Activated CD4-positive, alpha-beta T cell treated with anti-CD3 and anti-CD28 coated beads for 36 hours (primary cell): ENCODE measurements at regions of chr2 and their contacts with region 1.

Region 1: GRCh38 chr2:241508240-241509154 is at the start of gene STK25:
- DNase-seq: peak; percentile 99
- ATAC-seq: peak; percentile 96
- H3K4me3 Mint-ChIP-seq: peak within 1 kb of the TSS; percentile 79
- H3K27ac Mint-ChIP-seq: peak within 1 kb of the TSS; percentile 58
- H3K4me1 Mint-ChIP-seq: peaks cover 19% of the 10 kb centered on the region
- H3K27me3 Mint-ChIP-seq: peaks cover 3% of the 10 kb centered on the region
- total RNA-seq, gene STK25: 93.5 to 123 TPM

Region 2: DNA sequence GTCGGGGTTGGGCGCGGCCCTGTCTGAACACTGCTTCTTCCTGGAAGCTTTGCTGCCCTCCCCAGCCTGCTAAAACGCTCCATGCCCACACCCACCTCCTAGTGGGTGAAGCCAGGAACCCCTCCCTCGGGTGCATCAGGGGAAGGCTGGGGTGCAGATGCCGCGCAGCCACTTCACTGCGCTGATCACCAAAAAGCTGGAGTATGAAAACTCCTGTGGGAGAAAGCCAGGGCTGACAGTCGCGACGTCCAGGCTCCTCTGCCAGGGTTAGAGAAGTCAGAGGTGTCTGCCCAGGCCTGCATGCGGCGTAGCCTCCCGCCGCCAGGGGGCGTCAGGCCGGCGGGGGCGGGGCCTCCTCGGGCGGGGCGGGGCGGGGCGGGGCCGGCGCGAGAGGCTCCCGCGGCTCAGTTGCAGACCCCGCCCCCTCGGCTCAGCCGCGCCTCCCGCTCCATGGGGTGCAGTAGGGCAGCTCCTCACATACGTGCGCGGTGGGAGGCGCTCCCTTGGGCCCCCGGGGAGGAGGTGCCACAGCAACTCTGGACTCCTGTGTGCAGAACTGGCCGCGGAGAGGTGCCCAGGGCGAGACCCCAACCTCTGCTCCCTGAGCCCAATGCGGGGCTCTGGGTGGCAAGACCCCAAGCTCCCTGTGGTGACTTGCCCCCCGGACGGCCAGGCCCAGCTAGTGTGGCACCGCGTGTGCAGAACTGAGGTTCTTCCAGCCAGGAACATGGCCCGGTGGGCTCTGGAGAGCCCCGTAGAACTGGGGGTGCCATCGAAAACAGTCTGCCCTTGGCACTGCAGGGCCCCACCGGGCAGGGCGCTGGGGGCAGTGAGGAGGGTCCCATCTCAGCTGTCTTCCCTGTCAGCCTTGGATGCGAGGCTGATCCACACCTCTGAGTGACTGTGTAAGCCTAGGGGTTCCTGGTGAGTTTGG is 942.0 kb before region 1 on chr2:
- CTCF ChIA-PET with region 1: no interaction called
- POLR2A ChIA-PET with region 1: no interaction called
- intact Hi-C with region 1: loop called in 1 of 2 experiments (anchors 5 kb)
- DNase-seq: peak; percentile 98
- ATAC-seq: peak; percentile 67
- H3K4me3 Mint-ChIP-seq: peak overlapping the region; percentile 87
- H3K27ac Mint-ChIP-seq: peak overlapping the region; percentile 98
- H3K4me1 Mint-ChIP-seq: peaks cover 65% of the 10 kb centered on the region
- H3K27me3 Mint-ChIP-seq: no peaks in the 10 kb centered on the region

Region 3: DNA sequence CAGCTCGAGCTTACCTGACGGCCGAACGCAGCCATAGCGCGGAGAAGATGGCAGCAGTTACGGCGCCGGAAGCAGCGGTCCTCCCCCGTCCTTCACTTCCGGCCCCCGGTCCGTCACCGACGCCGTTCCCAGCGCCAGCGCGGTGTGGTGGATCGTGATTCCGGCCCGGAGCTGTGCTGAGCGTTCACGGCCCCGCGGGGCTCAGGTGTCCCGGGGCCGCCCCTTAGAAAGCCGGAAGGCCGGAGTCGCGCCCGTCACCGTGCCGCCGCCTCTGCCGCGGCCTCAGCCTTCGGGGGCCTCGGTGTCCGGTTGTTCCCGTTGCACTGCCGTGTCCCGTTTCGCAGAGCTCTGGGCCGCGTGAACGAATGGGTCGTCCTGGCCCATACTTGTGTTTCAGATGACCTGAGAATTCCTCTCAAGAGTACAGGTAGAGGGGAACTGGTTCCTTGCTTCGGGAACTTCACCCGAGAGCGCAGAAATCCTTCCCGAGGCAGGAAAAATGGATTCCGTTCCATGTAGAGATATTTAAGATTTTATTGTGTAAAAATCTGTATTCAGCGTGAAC is 406.2 kb before region 1 on chr2 and contains the start of gene MTERF4:
- CTCF ChIA-PET with region 1: no interaction called
- POLR2A ChIA-PET with region 1: no interaction called
- intact Hi-C with region 1: loop called in 1 of 2 experiments (anchors 1 kb)
- DNase-seq: peak; percentile 94
- ATAC-seq: peak; percentile 97
- H3K4me3 Mint-ChIP-seq: peak within 1 kb of the TSS; percentile 98
- H3K27ac Mint-ChIP-seq: peak within 1 kb of the TSS; percentile 99
- H3K4me1 Mint-ChIP-seq: peaks cover 48% of the 10 kb centered on the region
- H3K27me3 Mint-ChIP-seq: no peaks in the 10 kb centered on the region
- total RNA-seq, gene MTERF4: 34.4 to 34.5 TPM

Region 4: DNA sequence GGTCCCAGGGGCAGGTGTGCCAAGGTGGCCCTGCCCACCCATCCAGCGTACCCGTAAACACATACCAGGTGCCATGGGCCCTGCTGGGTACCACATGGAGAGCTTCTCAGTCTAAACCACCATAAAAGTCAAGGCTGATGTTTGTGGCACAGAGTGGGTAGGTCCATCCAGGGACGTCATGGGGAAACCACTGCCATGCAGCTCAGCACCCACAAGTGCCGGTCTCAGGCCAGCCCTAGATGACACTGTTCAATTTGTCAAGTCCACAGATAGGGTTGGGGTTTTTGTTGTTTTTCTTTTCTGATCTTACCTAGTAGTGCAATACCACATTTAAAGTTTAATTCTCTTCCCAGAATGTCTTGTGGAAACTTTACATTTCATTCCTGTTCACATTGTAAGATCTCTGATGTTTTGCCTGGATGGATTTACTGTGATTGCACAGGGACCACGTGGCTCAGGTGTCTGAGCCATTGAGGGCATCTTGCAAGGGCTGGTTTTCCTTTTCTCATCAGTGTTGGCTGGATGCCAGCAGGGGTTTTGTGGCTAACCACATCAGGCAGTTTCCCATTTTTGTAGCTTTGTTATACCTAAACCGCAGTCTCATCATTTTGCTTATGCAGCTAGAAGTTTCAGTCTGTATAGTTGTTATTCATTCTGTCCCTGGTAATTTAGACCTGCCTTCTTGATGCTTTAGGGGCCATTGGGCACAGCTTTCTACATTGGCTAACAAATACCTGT is 64.8 kb before region 1 on chr2:
- CTCF ChIA-PET with region 1: interaction called, 3 read pairs
- POLR2A ChIA-PET with region 1: no interaction called
- intact Hi-C with region 1: loop called in 1 of 2 experiments (anchors 1 kb)
- DNase-seq: peak; percentile 95
- ATAC-seq: peak; percentile 86
- H3K4me3 Mint-ChIP-seq: peak overlapping the region; percentile 48
- H3K27ac Mint-ChIP-seq: peak overlapping the region; percentile 45
- H3K4me1 Mint-ChIP-seq: peaks cover 27% of the 10 kb centered on the region
- H3K27me3 Mint-ChIP-seq: peaks cover 37% of the 10 kb centered on the region

Region 5: DNA sequence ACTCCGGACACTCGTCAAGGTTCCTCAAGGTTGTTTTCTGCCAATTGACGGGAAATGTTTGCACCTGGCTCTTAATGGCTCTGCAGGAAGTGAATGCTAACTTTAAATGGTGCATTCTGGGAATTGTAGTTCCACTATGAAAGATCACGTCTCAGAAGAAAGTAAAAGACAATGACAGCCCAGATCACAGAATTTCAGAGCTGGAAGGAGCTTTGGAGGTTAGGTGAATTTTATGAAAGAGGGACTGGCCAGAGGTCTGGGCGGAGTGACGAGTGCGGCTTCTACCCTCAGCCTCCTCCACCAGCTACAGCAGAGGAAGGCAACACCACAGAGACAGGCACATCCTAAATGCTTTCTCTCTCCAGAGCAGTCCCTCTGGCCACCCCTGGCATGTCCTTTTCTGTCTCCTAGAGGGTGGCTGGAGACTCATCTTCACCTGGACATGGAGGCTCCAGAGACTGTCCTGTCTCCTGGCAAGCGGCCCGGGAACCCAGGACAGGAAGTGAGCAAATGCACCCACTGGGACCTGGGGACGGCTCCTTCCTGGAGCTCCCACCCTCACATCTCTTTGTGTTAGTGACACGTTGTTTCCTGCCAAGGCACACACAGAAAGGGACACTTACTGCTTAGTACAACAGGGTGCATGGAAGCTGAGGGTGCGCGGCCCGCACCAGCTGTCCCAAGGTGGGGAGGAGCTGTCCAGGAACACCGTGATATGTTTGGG is 109.1 kb after region 1 on chr2:
- CTCF ChIA-PET with region 1: interaction called, 3 read pairs
- POLR2A ChIA-PET with region 1: no interaction called
- intact Hi-C with region 1: loop called in 1 of 2 experiments (anchors 1 kb)
- DNase-seq: peak; percentile 58
- ATAC-seq: peak; percentile 38
- H3K4me3 Mint-ChIP-seq: peak overlapping the region; percentile 66
- H3K27ac Mint-ChIP-seq: peak overlapping the region; percentile 98
- H3K4me1 Mint-ChIP-seq: peaks cover 51% of the 10 kb centered on the region
- H3K27me3 Mint-ChIP-seq: no peaks in the 10 kb centered on the region

Region 6: DNA sequence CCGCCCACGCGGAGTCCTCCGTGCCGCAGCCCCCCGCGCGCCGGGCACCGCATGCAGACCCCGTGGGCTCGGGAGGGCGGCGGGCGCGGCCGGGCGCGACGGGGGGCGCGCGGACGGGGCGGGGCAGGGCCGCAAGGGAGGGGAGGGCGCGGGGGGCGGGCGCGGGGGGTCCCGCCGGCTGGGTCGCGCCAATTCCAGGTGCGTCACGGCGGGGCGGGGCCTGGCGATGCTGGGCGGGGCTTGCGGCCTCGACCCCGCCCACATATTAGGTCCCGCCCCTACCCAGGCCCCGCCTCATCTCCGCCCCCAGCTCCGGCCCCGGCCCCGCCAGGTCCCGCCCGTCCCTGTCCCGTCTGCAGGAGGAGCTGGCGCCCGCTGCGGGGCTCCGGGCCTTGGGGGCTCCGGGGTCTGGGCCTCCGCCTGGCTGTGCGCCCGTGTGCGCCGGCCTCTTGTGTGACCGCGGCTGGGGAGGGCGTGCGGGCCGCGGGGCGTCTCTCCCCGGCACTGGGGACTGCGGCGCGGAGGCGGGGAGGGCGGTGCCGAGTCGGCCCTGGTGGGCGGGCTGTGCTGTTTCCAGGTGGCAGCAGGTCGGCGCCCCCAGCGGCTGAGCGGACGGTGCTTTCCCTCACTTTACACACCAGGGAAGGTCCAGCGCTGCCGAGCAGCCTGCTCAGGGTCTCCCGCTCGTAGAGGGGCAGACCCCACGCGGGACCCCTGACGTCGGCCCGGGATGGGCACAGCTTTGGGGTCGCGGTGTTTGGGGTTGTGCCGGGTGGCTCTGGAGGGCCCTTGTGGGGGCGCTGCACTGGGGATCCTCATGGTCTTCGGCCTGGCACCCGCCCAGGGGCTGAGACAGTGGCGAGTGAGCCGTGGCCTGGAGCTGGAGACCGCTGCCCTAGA is 193.9 kb after region 1 on chr2:
- CTCF ChIA-PET with region 1: no interaction called
- POLR2A ChIA-PET with region 1: interaction called, 5 read pairs
- intact Hi-C with region 1: loop called in 1 of 2 experiments (anchors 1 kb)
- DNase-seq: peak; percentile 94
- ATAC-seq: peak; percentile 70
- H3K4me3 Mint-ChIP-seq: peak overlapping the region; percentile 86
- H3K27ac Mint-ChIP-seq: peak overlapping the region; percentile 75
- H3K4me1 Mint-ChIP-seq: peaks cover 29% of the 10 kb centered on the region
- H3K27me3 Mint-ChIP-seq: no peaks in the 10 kb centered on the region